GM18951 (cell line): ENCODE measurements at regions of chr18 and their contacts with region 1.

Region 1: DNA sequence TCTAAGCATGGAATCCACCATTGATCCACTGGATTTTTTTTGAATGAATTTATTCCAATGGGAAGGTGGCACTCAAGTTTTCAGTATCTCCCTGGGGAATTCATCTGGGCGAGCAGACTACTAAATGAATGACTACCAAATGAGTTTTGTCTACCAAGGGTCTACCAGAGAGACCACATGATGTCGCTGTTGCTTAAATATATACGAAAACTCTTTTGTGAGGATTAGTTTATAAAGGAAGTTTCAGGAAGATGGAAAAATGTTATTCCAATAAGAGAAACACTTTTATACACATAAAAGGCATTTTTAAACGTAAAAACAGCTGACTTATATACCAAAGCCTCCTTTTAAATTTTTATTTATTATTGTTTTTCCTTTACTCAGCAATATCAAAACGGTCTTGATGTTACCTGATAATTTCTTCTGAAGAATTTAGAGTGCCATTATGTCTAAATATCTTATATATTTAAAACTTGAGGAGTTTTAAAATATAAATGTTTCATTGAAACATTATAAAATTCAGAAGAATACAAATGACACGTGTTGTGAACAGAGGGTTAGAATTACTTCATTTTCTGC is 139.7 kb downstream of the HRH4 start:
- POLR2A ChIP-seq: no peak

Region 2: GRCh38 chr18:24293254-24293653 is 306.9 kb before region 1 on chr18:
- in situ Hi-C with region 1: no loop called
- POLR2A ChIP-seq: no peak

Region 3: GRCh38 chr18:24488824-24489493 is 111.2 kb before region 1 on chr18:
- in situ Hi-C with region 1: no loop called
- POLR2A ChIP-seq: no peak

Region 4: DNA sequence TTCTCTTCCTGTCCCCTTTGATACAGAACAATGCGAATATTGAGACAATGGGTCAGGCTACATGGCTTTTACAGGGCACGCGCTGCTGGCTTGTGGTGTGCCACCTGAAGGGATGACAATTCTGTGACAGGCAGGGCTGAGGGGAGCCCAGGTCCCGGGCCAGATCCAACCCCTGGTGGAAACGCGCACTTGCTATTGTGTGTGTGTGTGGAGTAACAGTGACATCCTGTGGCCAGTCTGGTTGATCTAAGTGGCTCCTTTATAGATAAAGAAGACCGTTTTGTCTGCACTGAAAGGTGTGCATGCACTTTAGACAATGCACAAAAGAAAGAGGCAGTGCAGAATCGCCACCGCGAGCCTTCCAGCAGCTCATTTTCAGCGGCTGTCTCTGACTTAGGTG is 133.9 kb after region 1 on chr18:
- in situ Hi-C with region 1: loop called (anchors 10 kb)
- POLR2A ChIP-seq: no peak

Region 5: GRCh38 chr18:25786758-25787157 is 1186.6 kb after region 1 on chr18:
- in situ Hi-C with region 1: no loop called
- POLR2A ChIP-seq: no peak